GM10248 (cell line): ENCODE measurements at regions of chr14 and their contacts with region 1.

Region 1: DNA sequence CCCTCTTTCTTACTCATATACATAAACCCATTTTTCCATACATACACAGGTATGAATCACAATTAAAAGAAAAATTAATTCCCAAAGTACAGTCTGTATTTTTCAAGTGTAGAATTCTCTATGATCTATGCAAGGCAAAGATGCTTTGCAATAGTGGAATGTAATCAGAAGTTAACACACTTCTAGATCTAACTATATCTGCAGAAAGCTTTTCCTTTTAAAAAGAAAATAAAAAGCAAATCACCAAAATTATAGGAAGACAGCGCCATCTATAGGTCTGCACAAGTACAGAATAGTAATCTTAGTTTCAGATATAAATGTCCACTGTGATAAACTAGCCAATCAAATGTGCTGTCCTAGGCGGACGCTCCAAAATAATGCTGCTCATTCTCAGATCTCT is 22.0 kb downstream of the SLC25A21 start:
- DNase-seq: no peak
- CTCF ChIP-seq: peak; percentile 17

Region 2: DNA sequence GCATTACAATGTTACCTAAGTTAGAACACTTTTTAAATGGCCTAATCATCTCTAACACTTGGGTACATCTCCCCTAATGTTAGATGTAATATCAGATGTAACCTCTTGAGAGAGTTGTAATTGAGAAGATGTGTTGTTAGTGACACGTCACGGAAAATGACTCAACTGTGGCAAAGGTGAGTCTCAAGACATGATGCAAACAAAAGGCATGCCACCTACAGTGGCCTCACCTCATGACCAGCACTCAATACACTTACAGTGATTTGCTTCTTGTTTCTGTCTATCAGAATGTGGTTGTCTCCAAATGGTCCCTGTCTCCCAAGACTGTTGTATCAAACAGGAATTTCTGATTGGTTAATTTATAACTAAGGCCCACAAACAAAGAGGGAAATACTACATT is 69.2 kb before region 1 on chr14:
- CTCF ChIA-PET with region 1: no interaction called
- POLR2A ChIA-PET with region 1: no interaction called
- DNase-seq: no peak
- CTCF ChIP-seq: no peak

Region 3: DNA sequence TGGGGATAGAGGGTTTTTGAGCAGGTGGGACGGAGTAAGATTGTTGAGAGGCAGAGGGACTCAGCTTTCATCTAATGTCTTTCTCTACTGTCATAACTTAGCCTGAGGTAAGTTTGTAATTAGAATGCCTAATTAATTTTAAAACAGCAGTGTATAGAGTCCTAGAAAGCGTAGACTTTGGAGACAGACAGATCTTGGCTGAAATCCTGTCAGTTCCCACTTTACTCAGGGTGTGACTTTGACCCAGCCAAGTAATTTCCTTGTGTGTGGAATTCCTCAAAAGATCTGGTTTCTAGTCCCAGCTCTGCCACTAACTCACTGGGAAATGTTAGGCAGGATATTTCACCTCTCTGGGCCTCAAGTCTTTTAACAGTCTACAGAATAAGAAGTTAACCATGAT is 52.3 kb before region 1 on chr14:
- CTCF ChIA-PET with region 1: no interaction called
- POLR2A ChIA-PET with region 1: no interaction called
- DNase-seq: no peak
- CTCF ChIP-seq: no peak

Region 4: GRCh38 chr14:37139710-37140109 is 10.7 kb before region 1 on chr14:
- CTCF ChIA-PET with region 1: interaction called, 11 read pairs
- POLR2A ChIA-PET with region 1: no interaction called
- DNase-seq: no peak
- CTCF ChIP-seq: no peak